Activated CD4-positive, alpha-beta T cell treated with anti-CD3 and anti-CD28 coated beads, Interleukin-2, amount 10 ng/mL, durations not matched to agents 24 days and 14 days (primary cell): ENCODE measurements at regions of chr15 and their contacts with region 1.

Region 1: DNA sequence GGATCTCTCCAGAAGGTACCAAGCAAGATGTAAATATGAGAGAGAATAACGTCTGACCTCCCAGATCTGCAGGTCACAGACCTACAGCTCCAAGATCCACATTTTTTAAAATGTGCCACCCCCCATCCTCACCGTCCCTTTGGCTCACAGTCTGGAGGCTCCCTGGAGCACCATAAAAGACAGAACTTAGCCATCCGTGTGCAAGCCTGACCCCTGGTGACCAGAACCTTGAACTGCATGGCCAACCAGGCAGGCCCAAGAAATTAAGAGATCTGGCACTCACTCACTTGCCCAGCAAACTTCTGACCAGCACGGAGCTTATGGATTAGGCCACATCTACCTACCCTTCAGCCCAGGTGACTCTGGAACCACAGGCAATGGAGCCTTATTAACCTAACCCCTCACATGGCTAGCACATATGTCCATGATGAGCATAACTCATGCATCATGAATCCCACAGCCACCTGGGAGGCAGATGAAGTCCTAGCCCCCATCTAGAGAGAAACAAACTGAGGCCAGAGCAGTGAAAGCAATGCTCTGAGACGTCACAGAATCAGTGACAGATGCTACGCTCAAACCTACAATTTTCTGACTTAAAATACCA is 275.3 kb downstream of the UACA start:
- DNase-seq: peak; percentile 93
- H3K4me3 Mint-ChIP-seq: no peak overlapping the region
- H3K27ac Mint-ChIP-seq: peak overlapping the region; percentile 80
- H3K4me1 Mint-ChIP-seq: peaks cover 80% of the 10 kb centered on the region
- H3K27me3 Mint-ChIP-seq: peaks cover 36% of the 10 kb centered on the region

Region 2: GRCh38 chr15:69576035-69576526 is 912.0 kb before region 1 on chr15:
- intact Hi-C with region 1: loop called (anchors 1 kb)
- DNase-seq: peak; percentile 87
- H3K4me3 Mint-ChIP-seq: no peak overlapping the region
- H3K27ac Mint-ChIP-seq: peak overlapping the region; percentile 30
- H3K4me1 Mint-ChIP-seq: peaks cover 39% of the 10 kb centered on the region
- H3K27me3 Mint-ChIP-seq: peaks cover 9% of the 10 kb centered on the region

Region 3: DNA sequence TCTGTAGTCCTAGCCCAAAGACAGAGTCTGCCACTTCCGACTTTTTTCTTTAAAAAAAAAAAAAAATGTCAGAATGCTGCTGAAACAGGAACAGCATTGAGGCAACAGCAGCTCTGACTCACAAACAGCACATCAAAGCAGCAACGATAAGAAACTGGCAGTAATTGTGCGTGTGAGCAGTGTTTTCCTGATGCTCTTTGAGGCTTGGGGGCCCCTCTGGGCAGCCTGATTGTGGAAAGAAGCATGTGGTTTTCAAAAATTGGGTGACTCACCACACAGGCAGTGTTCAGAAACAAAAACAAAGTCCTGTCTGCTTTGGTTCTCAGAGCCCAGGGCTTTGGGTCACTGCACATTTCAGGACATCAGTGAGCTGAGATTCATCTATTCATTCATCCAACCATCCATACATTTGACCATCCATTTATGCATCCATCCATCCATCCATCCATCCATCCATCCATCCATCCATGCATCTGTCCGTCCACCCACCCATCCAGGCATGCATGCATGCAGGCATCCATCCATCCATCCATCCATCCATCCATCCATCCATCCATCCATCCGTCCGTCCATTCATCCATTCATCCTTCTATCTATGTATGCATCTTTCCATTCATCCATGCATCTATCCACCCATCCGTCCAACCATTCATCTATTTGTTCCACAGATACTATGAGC is 727.1 kb before region 1 on chr15:
- intact Hi-C with region 1: loop called (anchors 1 kb)
- DNase-seq: peak; percentile 95
- H3K4me3 Mint-ChIP-seq: peak overlapping the region; percentile 76
- H3K27ac Mint-ChIP-seq: peak overlapping the region; percentile 87
- H3K4me1 Mint-ChIP-seq: peaks cover 77% of the 10 kb centered on the region
- H3K27me3 Mint-ChIP-seq: peaks cover 2% of the 10 kb centered on the region

Region 4: GRCh38 chr15:70259028-70259424 is 229.1 kb before region 1 on chr15:
- intact Hi-C with region 1: loop called (anchors 2 kb)
- DNase-seq: peak; percentile 83
- H3K4me3 Mint-ChIP-seq: peak overlapping the region; percentile 51
- H3K27ac Mint-ChIP-seq: no peak overlapping the region
- H3K4me1 Mint-ChIP-seq: peaks cover 48% of the 10 kb centered on the region
- H3K27me3 Mint-ChIP-seq: peaks cover 35% of the 10 kb centered on the region

Region 5: DNA sequence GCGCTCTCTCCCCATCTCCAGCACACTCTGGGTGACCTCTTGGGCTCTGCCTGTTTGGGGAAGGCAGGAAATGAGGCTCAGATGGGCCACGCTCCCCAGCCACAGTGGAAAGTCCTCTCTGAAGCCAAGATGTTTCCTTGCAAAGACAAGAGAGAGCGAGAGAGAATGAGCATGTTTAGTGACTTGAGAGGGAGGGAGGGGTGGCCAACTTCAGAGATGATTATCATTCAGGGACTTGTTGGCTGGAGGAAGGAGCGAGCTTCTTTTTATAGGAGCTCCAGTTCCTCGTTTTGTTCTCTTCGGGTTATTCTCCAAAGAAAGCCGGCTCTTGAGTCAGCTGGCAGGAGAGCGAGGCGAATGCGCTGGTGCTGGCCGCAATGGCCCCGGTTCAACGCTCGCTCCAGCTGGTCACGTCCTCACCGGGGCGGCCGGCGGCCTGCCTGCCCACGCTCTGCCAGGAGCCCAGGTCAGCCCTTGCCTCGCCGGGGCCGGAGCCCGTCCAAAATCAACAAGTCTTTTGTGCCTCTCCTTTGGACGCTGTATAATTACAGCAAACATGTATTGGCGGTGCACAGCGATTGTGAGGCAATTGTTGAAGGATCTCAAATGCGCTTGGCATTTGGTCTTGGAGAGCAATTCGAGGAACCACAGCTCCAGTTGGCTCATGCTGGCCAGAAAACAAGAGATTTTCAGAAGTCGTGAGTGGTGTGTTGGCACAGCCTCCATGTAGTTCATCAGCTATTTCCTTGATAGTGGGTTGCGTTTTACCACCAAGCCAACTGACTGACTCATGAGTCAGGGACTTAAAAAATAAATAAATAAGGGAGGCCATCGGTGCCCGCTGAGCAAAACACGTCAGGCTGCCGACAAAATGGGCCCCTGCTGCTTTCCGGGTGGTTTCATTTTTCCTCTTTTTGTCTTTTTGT is 13.4 kb before region 1 on chr15:
- intact Hi-C with region 1: loop called (anchors 2 kb)
- DNase-seq: peak; percentile 75
- H3K4me3 Mint-ChIP-seq: peak overlapping the region; percentile 53
- H3K27ac Mint-ChIP-seq: peak overlapping the region; percentile 25
- H3K4me1 Mint-ChIP-seq: peaks cover 40% of the 10 kb centered on the region
- H3K27me3 Mint-ChIP-seq: peaks cover 51% of the 10 kb centered on the region

Region 6: GRCh38 chr15:70528270-70528706 is 40.2 kb after region 1 on chr15:
- intact Hi-C with region 1: loop called (anchors 2 kb)
- DNase-seq: peak; percentile 92
- H3K4me3 Mint-ChIP-seq: peak overlapping the region; percentile 79
- H3K27ac Mint-ChIP-seq: peak overlapping the region; percentile 74
- H3K4me1 Mint-ChIP-seq: peaks cover 43% of the 10 kb centered on the region
- H3K27me3 Mint-ChIP-seq: peaks cover 5% of the 10 kb centered on the region

Region 7: GRCh38 chr15:70650567-70651302 is 162.6 kb after region 1 on chr15:
- intact Hi-C with region 1: no loop called
- DNase-seq: no peak
- H3K4me3 Mint-ChIP-seq: no peak overlapping the region
- H3K27ac Mint-ChIP-seq: no peak overlapping the region
- H3K4me1 Mint-ChIP-seq: no peaks in the 10 kb centered on the region
- H3K27me3 Mint-ChIP-seq: peaks cover 46% of the 10 kb centered on the region